A673 (cell line): ENCODE measurements at regions of chr5 and their contacts with region 1.

Region 1: DNA sequence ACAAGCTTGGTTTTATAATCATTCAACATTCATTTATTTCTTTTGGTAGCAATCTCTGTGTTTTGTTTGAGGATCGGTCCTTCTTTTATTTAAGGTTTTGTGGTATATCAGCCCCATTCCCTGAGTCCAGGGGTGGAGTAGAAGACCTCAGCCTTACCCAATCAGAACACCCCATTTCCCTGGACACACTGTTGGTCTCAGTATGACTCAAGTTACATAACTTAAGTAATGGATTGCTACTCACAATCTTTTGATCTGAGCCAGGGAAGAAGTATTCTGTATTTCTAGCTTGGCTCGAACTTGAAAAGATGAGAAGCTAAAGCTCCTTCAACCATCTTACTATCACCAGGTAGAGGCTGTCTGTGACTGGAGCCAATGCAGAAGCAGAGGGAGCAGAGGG is 175.2 kb upstream of the HAPLN1 start:
- DNase-seq: no peak
- H3K4me3 ChIP-seq: no peak overlapping the region
- H3K27ac ChIP-seq: no peak overlapping the region
- H3K4me1 ChIP-seq: no peaks in the 10 kb centered on the region
- H3K27me3 ChIP-seq: no peaks in the 10 kb centered on the region
- CTCF ChIP-seq: no peak

Region 2: GRCh38 chr5:82676661-82677060 is 1219.2 kb before region 1 on chr5:
- CTCF ChIA-PET with region 1: no interaction called
- POLR2A ChIA-PET with region 1: no interaction called
- intact Hi-C with region 1: no loop called
- DNase-seq: no peak
- H3K4me3 ChIP-seq: no peak overlapping the region
- H3K27ac ChIP-seq: no peak overlapping the region
- H3K4me1 ChIP-seq: peaks cover 4% of the 10 kb centered on the region
- H3K27me3 ChIP-seq: no peaks in the 10 kb centered on the region
- CTCF ChIP-seq: no peak

Region 3: DNA sequence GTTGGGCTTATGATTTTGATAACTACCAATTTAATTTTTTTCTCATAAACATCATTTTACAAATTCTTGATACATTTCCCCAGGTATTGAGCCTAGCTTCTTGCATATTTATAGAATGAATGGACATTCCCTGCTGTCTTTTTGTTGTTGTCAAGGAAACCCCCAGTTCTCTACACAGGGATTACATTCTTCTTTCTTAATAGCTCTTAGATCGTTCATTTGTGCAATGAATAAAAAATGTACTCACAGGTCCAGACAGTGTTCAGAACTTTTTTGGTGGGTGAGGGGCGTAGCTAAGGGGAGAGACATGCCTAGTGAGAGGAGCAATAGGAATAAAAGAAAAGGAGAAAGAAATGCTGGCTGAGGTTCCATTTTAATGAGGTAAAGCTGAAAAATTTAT is 365.7 kb before region 1 on chr5:
- CTCF ChIA-PET with region 1: interaction called, 11 read pairs
- POLR2A ChIA-PET with region 1: no interaction called
- intact Hi-C with region 1: no loop called
- DNase-seq: no peak
- H3K4me3 ChIP-seq: no peak overlapping the region
- H3K27ac ChIP-seq: no peak overlapping the region
- H3K4me1 ChIP-seq: no peaks in the 10 kb centered on the region
- H3K27me3 ChIP-seq: no peaks in the 10 kb centered on the region
- CTCF ChIP-seq: no peak